PC-3 (cell line): ENCODE measurements at regions of chr7 and their contacts with region 1.

Region 1: GRCh38 chr7:10128748-10129147 is 844.9 kb upstream of the PHF14 start:
- DNase-seq: peak; percentile 14
- ATAC-seq: peak; percentile 49; the same call in 1 of the 2 replicates
- H3K4me3 ChIP-seq: no peak overlapping the region
- H3K27ac ChIP-seq: no peak overlapping the region
- H3K4me1 ChIP-seq: no peaks in the 10 kb centered on the region
- H3K27me3 ChIP-seq: no peaks in the 10 kb centered on the region
- CTCF ChIP-seq: peak; percentile 48; the same call in 1 of the 2 replicates

Region 2: DNA sequence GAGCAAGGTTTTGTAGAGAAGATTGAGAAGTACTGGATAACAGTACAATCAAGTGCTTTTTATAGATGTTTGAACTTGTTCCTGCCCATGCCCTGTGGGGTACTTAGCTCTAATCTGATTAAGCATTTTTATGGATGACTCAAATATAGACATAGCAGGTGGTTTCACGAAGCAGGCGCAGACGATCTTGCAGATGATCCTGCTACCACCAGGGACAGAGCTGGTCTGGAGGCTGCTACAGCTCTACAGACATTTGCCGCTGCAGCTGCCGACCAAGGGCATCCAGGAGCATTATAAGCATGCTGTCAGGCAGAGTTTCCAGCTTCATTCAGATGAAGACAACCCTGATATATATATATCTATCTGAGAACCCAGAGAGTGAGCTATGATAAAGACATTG is 1044.9 kb before region 1 on chr7:
- CTCF ChIA-PET with region 1: no interaction called
- POLR2A ChIA-PET with region 1: no interaction called
- intact Hi-C with region 1: loop called (anchors 10 kb)
- DNase-seq: peak; percentile 48
- ATAC-seq: peak; percentile 99
- H3K4me3 ChIP-seq: no peak overlapping the region
- H3K27ac ChIP-seq: no peak overlapping the region
- H3K4me1 ChIP-seq: no peaks in the 10 kb centered on the region
- H3K27me3 ChIP-seq: no peaks in the 10 kb centered on the region
- CTCF ChIP-seq: no peak

Region 3: GRCh38 chr7:9498303-9498702 is 630.4 kb before region 1 on chr7:
- CTCF ChIA-PET with region 1: no interaction called
- POLR2A ChIA-PET with region 1: no interaction called
- intact Hi-C with region 1: loop called (anchors 1 kb)
- DNase-seq: no peak
- ATAC-seq: no peak
- H3K4me3 ChIP-seq: no peak overlapping the region
- H3K27ac ChIP-seq: no peak overlapping the region
- H3K4me1 ChIP-seq: no peaks in the 10 kb centered on the region
- H3K27me3 ChIP-seq: no peaks in the 10 kb centered on the region
- CTCF ChIP-seq: no peak

Region 4: GRCh38 chr7:9621927-9622326 is 506.8 kb before region 1 on chr7:
- CTCF ChIA-PET with region 1: no interaction called
- POLR2A ChIA-PET with region 1: no interaction called
- intact Hi-C with region 1: no loop called
- DNase-seq: no peak
- ATAC-seq: no peak
- H3K4me3 ChIP-seq: no peak overlapping the region
- H3K27ac ChIP-seq: no peak overlapping the region
- H3K4me1 ChIP-seq: no peaks in the 10 kb centered on the region
- H3K27me3 ChIP-seq: no peaks in the 10 kb centered on the region
- CTCF ChIP-seq: no peak

Region 5: DNA sequence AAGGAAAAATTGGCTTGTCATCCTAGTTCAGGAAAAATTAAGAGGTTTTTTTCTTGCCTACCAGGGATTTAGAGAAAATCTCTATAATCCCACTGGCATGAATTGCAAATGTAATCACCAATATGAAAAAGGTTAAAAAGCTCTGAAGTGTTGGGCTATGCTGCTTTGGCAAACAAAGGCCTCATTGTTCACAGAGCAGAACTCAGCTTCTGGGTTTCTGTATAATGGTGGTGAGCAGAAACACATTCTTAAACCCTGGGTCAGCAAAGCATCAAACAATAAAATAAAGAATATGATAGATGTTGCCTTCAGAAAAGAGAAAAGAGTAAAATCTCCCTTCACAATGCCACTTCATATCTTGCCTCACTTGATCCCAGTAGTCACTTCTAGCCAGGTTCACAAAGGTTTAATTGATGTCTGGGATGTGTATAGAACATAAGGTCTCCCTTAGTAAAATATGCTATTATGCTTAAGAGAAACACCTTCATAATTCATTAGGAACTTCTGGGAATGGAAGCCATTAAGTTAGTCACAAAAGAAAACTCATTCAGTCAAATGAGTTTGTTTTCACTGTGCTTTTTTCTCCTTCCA is 410.6 kb before region 1 on chr7:
- CTCF ChIA-PET with region 1: no interaction called
- POLR2A ChIA-PET with region 1: no interaction called
- intact Hi-C with region 1: loop called (anchors 10 kb)
- DNase-seq: peak; percentile 11
- ATAC-seq: peak; percentile 68
- H3K4me3 ChIP-seq: no peak overlapping the region
- H3K27ac ChIP-seq: no peak overlapping the region
- H3K4me1 ChIP-seq: peaks cover 7% of the 10 kb centered on the region
- H3K27me3 ChIP-seq: no peaks in the 10 kb centered on the region
- CTCF ChIP-seq: no peak